ENCODE measurements at regions of chr19 and their contacts with region 1.

Region 1: GRCh38 chr19:33988586-33988985 is 183.7 kb upstream of the LSM14A start:
- DNase-seq: no peak
- ATAC-seq: no peak
- H3K4me3 ChIP-seq: no peak overlapping the region
- H3K4me3 Mint-ChIP-seq: no peak overlapping the region
- H3K27ac ChIP-seq: no peak overlapping the region
- H3K27ac Mint-ChIP-seq: no peak overlapping the region
- H3K4me1 ChIP-seq: no peaks in the 10 kb centered on the region
- H3K4me1 Mint-ChIP-seq: no peaks in the 10 kb centered on the region
- H3K27me3 ChIP-seq: no peaks in the 10 kb centered on the region
- H3K27me3 Mint-ChIP-seq: peaks cover 14% of the 10 kb centered on the region
- CTCF ChIP-seq: no peak

Region 2: DNA sequence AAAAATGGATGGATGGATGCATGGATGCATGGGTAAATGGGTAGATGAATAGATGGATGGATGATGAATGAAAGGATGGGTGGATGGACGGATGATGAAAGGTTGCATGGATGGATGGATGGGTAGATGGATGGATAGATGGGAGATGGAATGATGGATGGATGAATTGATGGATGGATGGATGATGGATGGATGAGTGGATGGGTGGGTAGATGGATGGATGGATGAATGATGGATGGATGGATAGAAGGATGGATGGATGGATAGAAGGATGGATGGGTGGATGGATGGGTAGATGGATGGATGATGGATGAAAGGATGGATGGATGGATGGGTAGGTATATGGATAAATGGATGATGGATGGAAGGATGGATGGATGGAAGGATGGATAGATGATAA is 68.6 kb after region 1 on chr19:
- CTCF ChIA-PET with region 1: no interaction called
- POLR2A ChIA-PET with region 1: no interaction called
- intact Hi-C with region 1: loop called in 1 of 2 experiments (anchors 2 kb)
- DNase-seq: no peak
- ATAC-seq: no peak
- H3K4me3 ChIP-seq: no peak overlapping the region
- H3K4me3 Mint-ChIP-seq: no peak overlapping the region
- H3K27ac ChIP-seq: no peak overlapping the region
- H3K27ac Mint-ChIP-seq: no peak overlapping the region
- H3K4me1 ChIP-seq: no peaks in the 10 kb centered on the region
- H3K4me1 Mint-ChIP-seq: no peaks in the 10 kb centered on the region
- H3K27me3 ChIP-seq: no peaks in the 10 kb centered on the region
- H3K27me3 Mint-ChIP-seq: peaks cover 11% of the 10 kb centered on the region
- CTCF ChIP-seq: no peak

Measured in CD8-positive, alpha-beta T cell (primary cell).